ENCODE measurements at regions of chr4 and their contacts with region 1.

Region 1: DNA sequence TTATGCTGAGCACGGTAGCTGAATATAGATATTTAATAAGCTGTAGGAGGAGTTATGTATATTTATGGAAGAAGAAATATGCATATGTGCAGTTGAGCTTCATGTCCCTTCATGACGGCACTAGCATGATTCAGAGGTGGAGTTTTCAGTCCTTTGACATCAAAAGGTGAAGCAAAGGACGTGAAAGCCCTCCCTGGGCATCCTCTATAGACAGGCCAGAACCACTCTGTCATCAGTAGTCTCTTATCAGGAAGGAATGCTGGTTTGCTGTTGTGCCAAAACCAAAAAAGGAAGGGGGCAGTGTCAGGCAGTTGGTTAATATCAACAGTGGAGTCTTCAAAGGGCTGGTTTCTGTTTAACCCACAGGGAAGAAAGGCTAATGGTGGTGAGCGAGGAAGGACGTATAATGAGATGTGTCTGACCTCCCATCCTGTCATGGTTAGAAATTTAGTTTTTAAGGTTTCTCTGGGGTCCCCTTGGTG is 23.5 kb upstream of the IL2 start:
- DNase-seq: no peak
- H3K4me3 ChIP-seq: no peak overlapping the region
- H3K27ac ChIP-seq: no peak overlapping the region
- H3K4me1 ChIP-seq: no peaks in the 10 kb centered on the region
- H3K27me3 ChIP-seq: no peaks in the 10 kb centered on the region
- CTCF ChIP-seq: no peak
- EP300 ChIP-seq: no peak
- POLR2A ChIP-seq: no peak

Region 2: DNA sequence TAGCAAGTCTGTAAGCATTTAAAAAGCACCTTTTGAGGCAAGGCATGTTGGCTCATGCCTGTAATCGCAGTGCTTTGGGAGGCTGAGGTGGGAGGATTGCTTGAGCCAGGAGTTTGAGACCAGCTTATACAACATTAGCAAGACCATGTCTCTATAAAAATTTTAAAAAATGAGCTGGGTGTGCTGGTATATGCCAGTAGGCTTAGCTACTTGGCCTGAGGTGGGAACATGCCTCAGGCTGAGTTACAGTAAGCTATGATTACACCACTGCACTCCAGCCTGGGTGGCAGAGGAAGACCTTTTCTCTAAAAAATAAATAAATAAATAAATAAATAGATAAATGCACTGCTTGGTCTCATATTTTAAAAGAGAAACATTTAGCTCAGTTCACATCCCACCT is 301.0 kb before region 1 on chr4:
- intact Hi-C with region 1: no loop called
- DNase-seq: no peak
- H3K4me3 ChIP-seq: no peak overlapping the region
- H3K27ac ChIP-seq: no peak overlapping the region
- H3K4me1 ChIP-seq: no peaks in the 10 kb centered on the region
- H3K27me3 ChIP-seq: no peaks in the 10 kb centered on the region
- CTCF ChIP-seq: no peak
- EP300 ChIP-seq: no peak
- POLR2A ChIP-seq: no peak

Region 3: GRCh38 chr4:122900314-122900713 is 420.3 kb after region 1 on chr4:
- intact Hi-C with region 1: loop called in 1 of 4 experiments (anchors 5 kb)
- DNase-seq: no peak
- H3K4me3 ChIP-seq: no peak overlapping the region
- H3K27ac ChIP-seq: no peak overlapping the region
- H3K4me1 ChIP-seq: no peaks in the 10 kb centered on the region
- H3K27me3 ChIP-seq: no peaks in the 10 kb centered on the region
- CTCF ChIP-seq: no peak
- EP300 ChIP-seq: no peak
- POLR2A ChIP-seq: no peak

Region 4: GRCh38 chr4:123649645-123650391 is 1169.8 kb after region 1 on chr4:
- intact Hi-C with region 1: no loop called
- DNase-seq: peak in 1 of 5 donors; percentile 34
- H3K4me3 ChIP-seq: no peak overlapping the region
- H3K27ac ChIP-seq: no peak overlapping the region
- H3K4me1 ChIP-seq: peaks cover 2% of the 10 kb centered on the region
- H3K27me3 ChIP-seq: no peaks in the 10 kb centered on the region
- CTCF ChIP-seq: no peak
- EP300 ChIP-seq: no peak
- POLR2A ChIP-seq: no peak

Measured in ovary (tissue), 10 donors.